ENCODE measurements at regions of chr2 and their contacts with region 1.

Region 1: GRCh38 chr2:197499594-197500526 is at the starts of genes HSPD1 and HSPE1:
- DNase-seq: peak; percentile 98
- ATAC-seq: peak; percentile 91 to 96 (median 94)
- H3K4me3 ChIP-seq: peak within 1 kb of the TSS; percentile 89
- H3K27ac ChIP-seq: peak within 1 kb of the TSS; percentile 97
- H3K4me1 ChIP-seq: peaks cover 54% of the 10 kb centered on the region
- H3K27me3 ChIP-seq: no peaks in the 10 kb centered on the region
- CTCF ChIP-seq: no peak
- total RNA-seq, gene HSPD1: 167 to 252 (median 192) TPM
- total RNA-seq, gene HSPE1: 87.4 to 120 (median 112) TPM

Region 2: DNA sequence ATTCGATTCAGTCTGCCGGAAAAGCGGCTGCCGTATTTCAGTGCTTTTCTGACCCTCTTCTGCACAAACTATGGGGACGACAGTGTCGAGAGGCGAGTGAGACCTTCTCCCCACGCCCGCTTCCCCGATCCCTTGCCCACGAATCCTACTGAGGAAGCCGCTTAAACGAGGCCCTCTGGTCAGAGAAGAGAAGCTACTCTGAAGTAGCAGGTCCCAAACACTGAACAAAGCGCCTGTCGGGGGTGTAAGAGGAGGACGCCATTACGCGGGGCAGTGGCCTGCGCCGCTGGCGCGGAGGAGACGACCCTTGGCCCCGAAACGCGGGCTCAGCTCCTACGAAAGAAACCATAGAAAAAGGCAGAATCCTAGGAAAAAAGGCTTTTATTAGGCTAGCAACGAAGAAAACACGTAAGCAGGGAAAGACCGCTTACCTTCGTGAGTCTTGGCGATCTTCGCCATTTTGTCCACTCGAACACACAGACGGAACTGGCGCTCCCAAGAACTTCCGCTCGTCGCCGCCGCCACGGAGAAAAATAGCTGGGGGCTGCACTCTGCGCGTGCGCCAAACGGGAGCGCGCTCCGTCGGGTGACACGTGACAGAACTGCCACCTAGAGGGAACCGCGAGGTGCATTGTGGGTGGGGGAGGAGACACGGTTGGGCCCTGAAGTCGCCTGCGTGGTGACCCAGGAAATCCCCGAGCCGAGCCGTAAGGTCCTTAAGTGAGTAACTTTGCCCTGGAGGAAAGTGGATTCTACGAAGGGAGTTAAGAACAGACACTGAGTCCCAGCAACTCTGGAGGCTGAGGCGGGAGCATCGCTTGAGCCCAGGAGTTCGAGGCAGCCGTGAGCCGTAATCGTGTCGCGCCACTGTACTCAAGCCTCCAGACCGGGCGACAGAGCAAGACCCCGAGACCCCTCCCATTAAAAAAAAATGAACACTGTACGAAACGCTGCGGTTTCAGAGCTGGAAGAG is 65.0 kb before region 1 on chr2 and contains the start of gene SF3B1:
- intact Hi-C with region 1: loop called in 1 of 2 experiments (anchors 1 kb)
- DNase-seq: peak; percentile 98 to 99
- ATAC-seq: peak; percentile 98 to 99 (median 99)
- H3K4me3 ChIP-seq: peak within 1 kb of the TSS; percentile 97
- H3K27ac ChIP-seq: peak within 1 kb of the TSS; percentile 99
- H3K4me1 ChIP-seq: peaks cover 45% of the 10 kb centered on the region
- H3K27me3 ChIP-seq: no peaks in the 10 kb centered on the region
- CTCF ChIP-seq: no peak
- total RNA-seq, gene SF3B1: 112 to 162 (median 142) TPM

Region 3: GRCh38 chr2:197453161-197453914 is 46.5 kb before region 1 on chr2 and contains the start of gene COQ10B:
- intact Hi-C with region 1: loop called in 1 of 2 experiments (anchors 2 kb)
- DNase-seq: peak; percentile 99 to 100
- ATAC-seq: peak; percentile 94 to 97 (median 96)
- H3K4me3 ChIP-seq: peak within 1 kb of the TSS; percentile 78
- H3K27ac ChIP-seq: peak within 1 kb of the TSS; percentile 99
- H3K4me1 ChIP-seq: peaks cover 16% of the 10 kb centered on the region
- H3K27me3 ChIP-seq: no peaks in the 10 kb centered on the region
- CTCF ChIP-seq: peak; percentile 21
- total RNA-seq, gene COQ10B: 9.9 to 20.2 (median 18.5) TPM

Region 4: DNA sequence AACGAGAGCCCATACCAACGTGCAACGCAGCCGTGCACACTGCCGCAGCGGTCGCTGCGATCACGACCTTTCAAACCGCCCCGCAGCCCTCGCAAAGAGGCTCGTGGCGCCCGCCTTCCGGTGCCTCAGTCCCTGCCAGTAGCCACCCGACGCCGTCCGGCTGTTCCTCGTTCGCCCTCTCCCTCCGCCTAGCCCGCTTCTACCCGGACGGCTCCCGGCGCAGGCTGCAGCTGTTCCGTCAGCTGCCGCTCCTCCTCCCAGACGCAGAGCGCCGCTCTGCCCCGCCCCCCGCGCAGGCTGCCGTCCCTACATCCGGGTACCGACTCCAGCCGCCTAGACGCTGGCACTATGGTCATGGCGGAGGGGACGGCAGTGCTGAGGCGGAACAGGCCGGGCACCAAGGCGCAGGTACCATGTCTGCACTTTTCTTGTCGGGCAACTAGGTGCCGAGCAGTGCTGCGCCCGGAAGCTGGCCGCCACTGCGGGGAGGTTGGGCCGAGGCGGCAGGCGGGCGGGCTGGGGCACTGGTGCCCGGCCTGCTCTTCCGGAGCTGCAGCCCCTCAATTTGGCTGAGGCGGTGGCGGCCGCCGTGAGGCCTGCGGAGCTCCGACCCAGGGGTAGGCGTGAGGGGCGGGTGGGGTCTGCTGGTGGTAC is 16.0 kb after region 1 on chr2 and contains the start of gene MOB4:
- intact Hi-C with region 1: loop called in 1 of 2 experiments (anchors 2 kb)
- DNase-seq: peak; percentile 95 to 98
- ATAC-seq: peak; percentile 97 to 98 (median 98)
- H3K4me3 ChIP-seq: peak within 1 kb of the TSS; percentile 87
- H3K27ac ChIP-seq: peak within 1 kb of the TSS; percentile 93
- H3K4me1 ChIP-seq: peaks cover 33% of the 10 kb centered on the region
- H3K27me3 ChIP-seq: no peaks in the 10 kb centered on the region
- CTCF ChIP-seq: no peak
- total RNA-seq, gene MOB4: 22.7 to 30.0 (median 29.0) TPM

Region 5: GRCh38 chr2:197777823-197778407 is 278.1 kb after region 1 on chr2:
- intact Hi-C with region 1: loop called in 1 of 2 experiments (anchors 10 kb)
- DNase-seq: no peak
- ATAC-seq: peak in 1 of 4 donors; percentile 50
- H3K4me3 ChIP-seq: no peak overlapping the region
- H3K27ac ChIP-seq: no peak overlapping the region
- H3K4me1 ChIP-seq: peaks cover 24% of the 10 kb centered on the region
- H3K27me3 ChIP-seq: no peaks in the 10 kb centered on the region
- CTCF ChIP-seq: peak; percentile 79